CD8-positive, alpha-beta memory T cell (primary cell): ENCODE measurements at regions of chrX and their contacts with region 1.

Region 1: DNA sequence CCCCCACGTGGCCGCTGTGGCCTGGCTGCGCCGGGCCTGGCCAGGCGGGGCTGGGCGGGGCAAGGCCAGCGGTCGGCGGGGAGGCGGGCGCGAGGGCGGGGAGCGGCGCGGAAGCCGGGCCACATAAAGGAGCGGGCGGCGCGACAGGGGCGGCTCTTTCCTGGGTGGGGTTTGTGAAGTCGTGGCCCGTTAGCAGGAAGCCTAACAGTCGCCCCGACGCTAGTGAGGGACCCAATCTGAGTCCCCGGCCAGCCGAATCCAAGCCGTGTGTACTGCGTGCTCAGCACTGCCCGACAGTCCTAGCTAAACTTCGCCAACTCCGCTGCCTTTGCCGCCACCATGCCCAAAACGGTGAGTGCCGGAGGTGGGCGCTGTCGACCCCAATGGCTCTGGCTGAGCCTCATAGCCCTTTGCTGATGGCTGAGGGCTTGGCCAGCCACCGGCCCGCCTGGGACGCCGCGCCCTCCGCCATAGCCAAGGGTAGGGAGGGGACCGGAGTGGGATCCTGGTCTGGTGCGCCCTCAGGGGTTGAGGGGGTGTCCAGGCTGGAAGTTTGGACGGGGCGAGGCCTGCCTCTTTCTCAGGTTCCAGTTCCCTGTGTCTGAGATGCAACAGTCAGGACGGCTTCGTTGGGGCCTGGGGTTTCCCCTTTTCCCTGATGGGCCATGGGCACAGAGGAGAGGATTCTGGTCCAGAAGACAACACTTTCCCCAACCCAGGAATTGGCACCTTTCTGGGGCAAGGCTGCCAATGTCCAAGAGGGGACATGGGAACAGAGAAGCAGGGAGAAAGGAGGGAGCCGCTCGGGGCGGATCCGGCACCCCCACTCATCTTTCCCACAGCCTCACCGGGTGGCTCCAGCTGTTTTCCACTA is at the start of gene MSN:
- DNase-seq: peak; percentile 63 to 83 (median 73)
- H3K4me3 ChIP-seq: peak within 1 kb of the TSS; percentile 93
- H3K4me3 Mint-ChIP-seq: peak within 1 kb of the TSS; percentile 92 to 100 (median 96)
- H3K27ac ChIP-seq: peak within 1 kb of the TSS; percentile 81
- H3K27ac Mint-ChIP-seq: peak within 1 kb of the TSS; percentile 87 to 97 (median 94)
- H3K4me1 ChIP-seq: peaks cover 24% of the 10 kb centered on the region
- H3K4me1 Mint-ChIP-seq: peaks cover 37 to 49% (median 46%) of the 10 kb centered on the region in 3 donors
- H3K27me3 ChIP-seq: no peaks in the 10 kb centered on the region
- H3K27me3 Mint-ChIP-seq: no peaks in the 10 kb centered on the region
- total RNA-seq, gene MSN: 403 to 410 TPM

Region 2: GRCh38 chrX:65596270-65597034 is 71.3 kb before region 1 on chrX:
- CTCF ChIA-PET with region 1: interaction called, 4 read pairs
- POLR2A ChIA-PET with region 1: interaction called, 11 read pairs
- DNase-seq: peak; percentile 37 to 77 (median 51)
- H3K4me3 ChIP-seq: peak overlapping the region; percentile 50
- H3K4me3 Mint-ChIP-seq: peak overlapping the region; percentile 34 to 84 (median 78)
- H3K27ac ChIP-seq: peak overlapping the region; percentile 71
- H3K27ac Mint-ChIP-seq: peak overlapping the region; percentile 84 to 96 (median 94)
- H3K4me1 ChIP-seq: peaks cover 56% of the 10 kb centered on the region
- H3K4me1 Mint-ChIP-seq: peaks cover 55 to 61% (median 60%) of the 10 kb centered on the region in 3 donors
- H3K27me3 ChIP-seq: no peaks in the 10 kb centered on the region
- H3K27me3 Mint-ChIP-seq: peaks cover 0 to 5% of the 10 kb centered on the region in 2 donors

Region 3: DNA sequence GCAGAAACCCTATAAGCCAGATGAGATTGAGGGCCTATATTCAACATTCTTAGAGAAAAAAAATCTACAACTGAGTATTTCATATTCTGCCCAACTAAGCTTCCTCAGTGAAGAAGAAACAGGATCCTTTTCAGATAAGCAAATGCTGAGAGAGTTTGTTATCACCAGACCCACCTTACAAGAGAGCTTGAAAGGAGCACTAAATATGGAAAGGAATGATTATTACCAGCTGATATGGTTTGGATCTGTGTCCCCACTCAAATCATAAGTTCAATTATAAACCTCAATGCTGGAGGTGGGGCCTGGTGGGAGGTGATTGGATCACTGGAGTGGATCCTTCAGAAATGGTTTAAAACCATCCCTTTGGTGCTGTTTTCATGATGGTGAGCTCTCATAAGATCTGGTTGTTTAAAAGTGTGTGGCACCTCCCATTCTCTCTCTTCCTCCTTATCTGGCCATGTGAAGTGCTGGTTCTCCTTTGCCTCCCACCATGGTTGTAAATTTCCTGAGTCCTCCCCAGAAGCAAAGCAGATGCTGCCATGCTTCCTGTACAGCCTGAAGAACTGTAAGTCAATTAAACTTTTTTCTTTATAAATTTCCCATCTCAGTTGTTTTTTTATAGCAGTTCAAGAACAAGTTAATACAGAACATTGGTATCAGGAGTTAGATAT is 144.0 kb after region 1 on chrX:
- CTCF ChIA-PET with region 1: no interaction called
- POLR2A ChIA-PET with region 1: no interaction called
- DNase-seq: no peak
- H3K4me3 ChIP-seq: no peak overlapping the region
- H3K4me3 Mint-ChIP-seq: no peak overlapping the region
- H3K27ac ChIP-seq: no peak overlapping the region
- H3K27ac Mint-ChIP-seq: peak overlapping the region in 1 of 8 donors; percentile 71
- H3K4me1 ChIP-seq: no peaks in the 10 kb centered on the region
- H3K4me1 Mint-ChIP-seq: no peaks in the 10 kb centered on the region
- H3K27me3 ChIP-seq: no peaks in the 10 kb centered on the region
- H3K27me3 Mint-ChIP-seq: no peaks in the 10 kb centered on the region